ENCODE measurements at regions of chr3 and their contacts with region 1.

Region 1: DNA sequence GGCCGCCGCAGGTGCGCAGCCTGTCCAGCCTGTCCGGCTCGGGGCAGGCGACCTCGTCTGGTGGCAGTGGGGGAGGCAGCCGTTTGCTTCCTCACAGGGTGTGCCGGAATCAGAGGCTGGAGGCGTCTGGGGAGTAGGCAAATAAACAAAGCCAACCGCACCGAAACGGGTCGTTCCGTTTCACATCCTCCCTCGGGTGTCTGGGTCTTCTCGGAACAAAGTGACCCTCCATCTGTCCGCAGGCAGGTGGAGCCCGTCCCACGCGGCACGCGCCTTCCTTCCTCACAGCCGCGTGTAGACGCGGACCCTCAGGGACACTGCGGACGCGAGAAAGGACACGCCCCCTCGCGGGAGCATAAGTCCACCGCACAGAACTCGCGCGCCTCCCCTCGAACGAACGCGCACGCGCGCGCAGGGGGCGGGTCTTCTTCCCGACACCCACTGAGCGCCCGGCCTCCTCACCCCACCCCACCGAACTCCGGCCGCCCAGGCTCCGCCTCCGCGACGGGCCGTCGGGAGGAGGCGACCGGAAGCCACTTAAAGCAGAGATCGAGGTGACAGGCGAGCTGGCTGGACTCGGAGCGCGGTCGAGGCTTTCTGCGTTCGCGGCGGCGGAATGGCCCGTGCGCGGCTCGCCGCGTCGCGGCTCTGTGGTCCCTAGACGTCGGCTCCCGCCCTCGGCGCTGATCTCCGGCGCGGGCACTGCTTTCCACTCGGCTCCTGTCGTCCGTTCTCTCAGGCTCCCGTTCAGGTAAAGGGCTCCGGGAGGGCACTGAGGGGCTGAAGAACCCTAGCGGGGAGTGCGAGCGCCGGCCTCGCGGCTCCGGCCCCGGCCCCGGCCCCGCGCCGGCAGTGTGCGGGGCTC is at the start of gene TIPARP:
- DNase-seq: peak; percentile 98
- CTCF ChIP-seq: peak; percentile 78

Region 2: DNA sequence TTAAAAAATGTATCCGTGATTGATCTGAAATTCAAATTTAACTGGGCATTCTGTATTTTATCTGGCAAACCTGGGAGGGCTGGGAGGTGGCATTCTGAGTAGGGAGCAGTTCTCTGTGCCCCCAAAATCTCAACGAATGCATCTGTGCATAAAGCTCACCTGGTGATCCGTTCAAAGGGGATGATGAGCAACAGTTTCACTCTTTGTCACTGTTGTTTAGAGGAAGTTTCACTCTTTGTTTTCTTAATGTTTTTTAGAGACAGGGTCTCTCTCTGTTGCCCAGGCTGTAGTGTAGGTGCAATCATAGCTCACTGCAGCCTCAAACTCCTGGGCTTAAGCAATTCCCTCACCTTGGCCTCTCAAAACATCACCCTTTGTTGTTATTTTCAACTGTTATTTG is 306.1 kb before region 1 on chr3:
- CTCF ChIA-PET with region 1: no interaction called
- POLR2A ChIA-PET with region 1: no interaction called
- DNase-seq: peak; percentile 29
- CTCF ChIP-seq: no peak

Region 3: DNA sequence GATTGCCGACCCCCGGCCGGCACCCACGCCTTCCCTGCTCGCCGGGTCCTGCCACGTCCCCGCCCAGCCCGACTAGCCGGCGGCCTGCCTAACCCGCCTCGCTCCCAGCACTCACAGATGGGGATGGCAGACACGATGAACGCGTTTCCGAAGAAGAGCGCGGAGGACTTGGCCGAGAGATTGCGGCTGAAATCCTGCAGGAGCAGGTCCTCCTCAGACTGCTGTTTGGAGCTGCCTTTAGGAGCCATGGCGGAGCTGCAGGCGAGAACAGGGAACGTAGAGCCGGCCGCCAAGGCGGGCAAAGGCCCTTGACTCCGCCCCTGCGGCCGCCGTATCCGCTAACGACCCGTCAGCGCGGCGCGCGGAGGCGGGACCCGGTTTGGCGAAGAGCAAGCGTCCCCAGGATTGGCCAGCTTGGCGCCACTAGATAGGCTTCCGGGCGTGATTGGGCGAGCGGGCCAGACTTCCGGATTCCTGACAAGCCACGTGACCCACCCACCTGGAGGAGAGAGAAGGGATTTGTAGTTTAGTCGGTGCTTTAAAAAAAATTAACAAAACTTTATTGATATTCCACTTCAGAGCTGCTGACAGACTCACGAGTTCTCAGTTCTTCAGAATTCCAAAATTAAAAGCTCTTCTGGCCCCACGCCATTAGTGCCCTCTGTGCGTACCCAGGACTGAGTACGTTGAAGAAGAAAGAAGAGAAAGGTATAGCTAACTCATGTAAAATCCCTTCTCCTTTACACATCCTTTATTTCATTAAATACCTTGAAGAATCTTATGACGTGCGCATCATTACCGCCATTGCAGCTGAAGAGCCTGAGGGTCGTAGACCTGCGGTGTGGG is 119.2 kb before region 1 on chr3 and contains the start of gene SSR3:
- CTCF ChIA-PET with region 1: interaction called, 25 read pairs
- POLR2A ChIA-PET with region 1: interaction called, 5 read pairs
- DNase-seq: peak; percentile 95
- CTCF ChIP-seq: no peak

Region 4: GRCh38 chr3:156626104-156626503 is 48.2 kb before region 1 on chr3:
- CTCF ChIA-PET with region 1: interaction called, 25 read pairs
- POLR2A ChIA-PET with region 1: no interaction called
- DNase-seq: no peak
- CTCF ChIP-seq: no peak

Region 5: DNA sequence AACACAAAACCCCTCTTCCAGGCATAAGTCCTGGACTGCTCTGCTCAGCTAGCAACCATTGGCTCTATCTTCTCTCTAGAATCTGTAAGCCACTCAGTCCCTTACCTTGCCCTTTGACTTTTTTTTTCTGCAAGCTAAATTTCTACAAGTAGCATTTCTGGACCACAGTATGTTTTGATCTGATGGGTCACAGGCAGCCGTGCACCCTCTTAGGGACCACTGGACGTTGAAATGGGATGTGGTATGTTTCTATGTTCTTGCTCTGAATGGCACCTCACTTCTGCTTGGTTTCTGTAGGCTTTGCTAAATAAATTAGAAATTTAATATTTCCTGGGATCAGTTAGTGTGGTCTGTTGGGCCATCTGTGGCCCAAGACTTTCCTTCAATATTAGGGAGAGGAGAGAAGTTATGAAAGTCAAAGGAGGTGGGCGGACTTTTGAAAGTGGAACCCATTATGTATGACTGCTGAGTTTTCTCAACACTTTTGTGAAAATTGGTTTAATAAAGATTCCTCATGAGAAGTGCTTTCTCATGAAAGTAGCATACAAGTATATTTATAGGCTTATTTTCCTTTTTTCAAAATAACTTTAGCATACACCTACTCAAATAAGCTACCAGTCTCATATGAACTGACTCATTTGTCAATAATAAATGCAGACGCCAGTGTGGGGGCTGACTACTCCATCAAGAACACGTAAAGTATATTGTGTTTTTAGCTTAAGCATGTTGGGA is 18.3 kb before region 1 on chr3:
- CTCF ChIA-PET with region 1: interaction called, 16 read pairs
- POLR2A ChIA-PET with region 1: no interaction called
- DNase-seq: peak; percentile 33
- CTCF ChIP-seq: no peak

Region 6: GRCh38 chr3:157088601-157089454 is 414.6 kb after region 1 on chr3:
- CTCF ChIA-PET with region 1: interaction called, 212 read pairs
- POLR2A ChIA-PET with region 1: interaction called, 11 read pairs
- DNase-seq: peak; percentile 97
- CTCF ChIP-seq: peak; percentile 4